HEK293T (cell line): ENCODE measurements at regions of chr11 and their contacts with region 1.

Region 1: GRCh38 chr11:117221775-117222517 is 9.9 kb downstream of the PCSK7 start:
- DNase-seq: no peak

Region 2: GRCh38 chr11:117178210-117179034 is 43.5 kb before region 1 on chr11 and contains the start of gene SIDT2:
- CTCF ChIA-PET with region 1: interaction called, 10 read pairs
- POLR2A ChIA-PET with region 1: interaction called, 4 read pairs
- DNase-seq: peak; percentile 91